HEK293 (cell line): ENCODE measurements at regions of chrX and their contacts with region 1.

Region 1: GRCh38 chrX:153609917-153610428 is 11.0 kb upstream of the CCNQ start:
- H3K4me3 ChIP-seq: peak overlapping the region; percentile 10
- H3K27ac ChIP-seq: no peak overlapping the region
- H3K4me1 ChIP-seq: no peaks in the 10 kb centered on the region
- CTCF ChIP-seq: peak; percentile 74

Region 2: DNA sequence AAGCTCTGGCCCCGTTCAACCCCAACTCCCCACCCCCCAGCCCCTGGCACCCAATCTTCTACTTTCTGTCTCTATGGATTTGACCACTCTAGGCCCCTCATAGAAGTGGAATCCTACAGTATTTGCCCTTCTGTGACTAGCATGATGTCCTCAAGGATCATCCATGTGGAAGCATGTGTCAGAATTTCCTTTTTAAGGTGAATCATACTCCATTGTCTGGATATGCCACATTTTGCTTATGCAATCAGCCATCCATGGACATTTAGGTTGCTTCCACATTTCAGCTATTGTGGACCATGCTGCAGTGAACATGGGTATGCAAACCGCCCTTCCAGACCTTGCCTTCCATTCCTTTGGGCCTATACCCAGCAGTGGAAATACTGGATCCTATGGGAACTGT is 26.5 kb before region 1 on chrX:
- CTCF ChIA-PET with region 1: no interaction called
- POLR2A ChIA-PET with region 1: no interaction called
- H3K4me3 ChIP-seq: no peak overlapping the region
- H3K27ac ChIP-seq: no peak overlapping the region
- H3K4me1 ChIP-seq: no peaks in the 10 kb centered on the region
- CTCF ChIP-seq: no peak

Region 3: DNA sequence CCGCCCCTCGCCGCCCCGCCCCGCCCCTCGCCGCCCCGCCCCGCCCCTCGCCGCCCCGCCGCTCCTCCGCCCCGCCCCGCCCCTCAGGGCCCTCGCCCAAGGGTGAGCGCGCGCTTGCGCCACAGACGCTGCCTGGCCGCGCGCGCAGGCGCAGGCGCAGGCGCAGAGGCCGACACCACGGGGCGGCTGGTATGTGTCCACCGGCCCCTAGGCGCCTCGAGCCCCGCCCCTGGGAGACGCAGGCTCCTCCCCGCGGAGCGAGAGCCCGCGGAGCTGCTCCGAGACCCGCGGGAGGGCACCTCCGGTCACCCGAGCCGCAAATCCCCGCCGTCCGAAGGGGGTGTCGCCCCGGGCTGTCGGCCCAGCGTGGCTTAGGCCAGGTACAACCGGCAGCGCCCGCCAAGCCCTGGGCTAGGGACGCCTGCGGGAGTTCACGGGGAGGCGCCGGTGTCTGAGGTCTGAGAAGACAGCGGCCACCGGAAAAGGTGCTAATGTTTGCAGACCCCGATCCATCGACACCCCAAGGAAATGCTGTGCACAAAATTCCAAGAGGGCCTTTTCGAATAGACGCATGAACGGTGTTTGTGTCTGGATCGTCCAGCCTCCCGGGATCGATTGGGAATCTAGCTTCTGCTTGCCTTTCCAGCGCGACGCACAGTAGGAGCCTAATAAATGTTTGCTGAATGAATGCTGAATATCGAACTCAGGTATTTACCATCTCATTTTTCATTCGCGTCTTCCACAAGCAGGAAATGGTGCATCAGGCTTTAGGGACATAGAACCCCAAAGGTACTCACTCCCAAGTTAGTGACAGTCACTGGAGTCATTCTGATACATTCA is 10.6 kb before region 1 on chrX:
- CTCF ChIA-PET with region 1: interaction called, 20 read pairs
- POLR2A ChIA-PET with region 1: no interaction called
- H3K4me3 ChIP-seq: peak overlapping the region; percentile 59
- H3K27ac ChIP-seq: peak overlapping the region; percentile 44; the same call in 1 of the 2 replicates
- H3K4me1 ChIP-seq: no peaks in the 10 kb centered on the region
- CTCF ChIP-seq: no peak

Region 4: GRCh38 chrX:153643431-153644351 is 33.7 kb after region 1 on chrX:
- CTCF ChIA-PET with region 1: interaction called, 17 read pairs
- POLR2A ChIA-PET with region 1: no interaction called
- H3K4me3 ChIP-seq: peak overlapping the region; percentile 1
- H3K27ac ChIP-seq: no peak overlapping the region
- H3K4me1 ChIP-seq: peaks cover 3% of the 10 kb centered on the region; the same call in 1 of the 2 replicates
- CTCF ChIP-seq: no peak

Region 5: DNA sequence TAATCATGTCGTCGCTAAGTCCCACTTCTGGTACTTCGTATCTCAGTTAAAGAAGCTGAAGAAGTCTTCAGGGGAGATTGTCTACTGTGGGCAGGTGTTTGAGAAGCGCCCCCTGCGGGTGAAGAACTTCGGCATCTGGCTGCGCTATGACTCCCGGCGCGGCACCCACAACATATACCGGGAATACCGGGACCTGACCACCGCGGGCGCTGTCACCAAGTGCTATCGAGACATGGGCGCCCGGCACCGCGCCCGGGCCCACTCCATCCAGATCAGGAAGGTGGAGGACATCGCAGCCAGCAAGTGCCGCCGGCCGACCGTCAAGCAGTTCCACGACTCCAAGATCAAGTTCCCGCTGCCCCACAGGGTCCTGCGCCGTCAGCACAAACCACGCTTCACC is 52.3 kb after region 1 on chrX:
- CTCF ChIA-PET with region 1: interaction called, 52 read pairs
- POLR2A ChIA-PET with region 1: no interaction called
- H3K4me3 ChIP-seq: no peak overlapping the region
- H3K27ac ChIP-seq: no peak overlapping the region
- H3K4me1 ChIP-seq: no peaks in the 10 kb centered on the region
- CTCF ChIP-seq: no peak